ENCODE measurements at regions of chr9 and their contacts with region 1.

Region 1: GRCh38 chr9:126860077-126860756 is at the start of gene ZBTB34:
- DNase-seq: peak; percentile 65
- ATAC-seq: peak; percentile 84 to 93
- total RNA-seq, gene ZBTB34: 5.2 to 5.6 TPM

Region 2: GRCh38 chr9:126914458-126915280 is 54.5 kb after region 1 on chr9 and contains the start of gene RALGPS1:
- intact Hi-C with region 1: loop called in 1 of 2 experiments (anchors 10 kb)
- DNase-seq: peak; percentile 97
- ATAC-seq: peak; percentile 99 to 100
- total RNA-seq, gene RALGPS1: 12.5 TPM

Measured in left cardiac atrium (tissue), 4 donors.